Mammary epithelial cell (primary cell): ENCODE measurements at regions of chr5 and their contacts with region 1.

Region 1: GRCh38 chr5:16855485-16855884 is 80.6 kb downstream of the MYO10 start:
- DNase-seq: no peak
- H3K4me3 ChIP-seq: no peak overlapping the region
- H3K27ac ChIP-seq: no peak overlapping the region
- H3K4me1 ChIP-seq: peaks cover 7% of the 10 kb centered on the region
- H3K27me3 ChIP-seq: no peaks in the 10 kb centered on the region
- CTCF ChIP-seq: no peak

Region 2: DNA sequence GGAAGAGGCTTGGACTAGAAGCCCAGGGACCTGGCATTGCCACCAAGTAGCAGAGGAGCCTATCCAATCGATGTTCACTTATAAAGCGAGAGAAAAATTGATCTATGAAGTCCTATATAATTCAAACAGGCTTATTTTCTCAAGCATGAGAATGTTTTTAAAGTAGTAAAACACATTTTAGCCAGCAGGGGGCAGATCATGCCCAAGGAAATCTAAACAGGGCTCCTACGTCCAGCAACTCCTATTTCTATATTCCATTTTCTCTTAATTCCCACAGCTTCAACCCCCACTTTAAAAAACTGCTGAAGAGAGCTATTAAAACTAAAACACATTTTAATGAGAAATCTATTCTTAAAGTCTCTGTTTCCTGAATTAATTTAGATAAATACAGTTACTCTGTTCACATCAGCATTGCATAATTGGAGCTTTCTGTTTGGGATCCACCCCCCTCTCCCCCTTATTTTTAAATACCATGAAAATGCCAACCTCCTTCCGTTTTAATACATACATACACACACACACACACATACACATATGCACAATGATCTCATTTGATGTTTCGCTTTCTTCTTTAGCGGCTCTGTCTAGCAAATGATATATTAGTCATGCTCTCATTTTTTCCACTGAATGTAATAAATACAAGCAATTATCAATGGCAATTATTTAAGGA is 64.3 kb before region 1 on chr5:
- CTCF ChIA-PET with region 1: no interaction called
- dilution Hi-C with region 1: loop called (anchors 10 kb)
- in situ Hi-C with region 1: no loop called
- intact Hi-C with region 1: no loop called
- DNase-seq: peak; percentile 27
- H3K4me3 ChIP-seq: no peak overlapping the region
- H3K27ac ChIP-seq: no peak overlapping the region
- H3K4me1 ChIP-seq: peaks cover 3% of the 10 kb centered on the region
- H3K27me3 ChIP-seq: no peaks in the 10 kb centered on the region
- CTCF ChIP-seq: peak; percentile 44 to 61